Right ventricle myocardium inferior (tissue), 1 donor: ENCODE measurements at regions of chr7 and their contacts with region 1.

Region 1: DNA sequence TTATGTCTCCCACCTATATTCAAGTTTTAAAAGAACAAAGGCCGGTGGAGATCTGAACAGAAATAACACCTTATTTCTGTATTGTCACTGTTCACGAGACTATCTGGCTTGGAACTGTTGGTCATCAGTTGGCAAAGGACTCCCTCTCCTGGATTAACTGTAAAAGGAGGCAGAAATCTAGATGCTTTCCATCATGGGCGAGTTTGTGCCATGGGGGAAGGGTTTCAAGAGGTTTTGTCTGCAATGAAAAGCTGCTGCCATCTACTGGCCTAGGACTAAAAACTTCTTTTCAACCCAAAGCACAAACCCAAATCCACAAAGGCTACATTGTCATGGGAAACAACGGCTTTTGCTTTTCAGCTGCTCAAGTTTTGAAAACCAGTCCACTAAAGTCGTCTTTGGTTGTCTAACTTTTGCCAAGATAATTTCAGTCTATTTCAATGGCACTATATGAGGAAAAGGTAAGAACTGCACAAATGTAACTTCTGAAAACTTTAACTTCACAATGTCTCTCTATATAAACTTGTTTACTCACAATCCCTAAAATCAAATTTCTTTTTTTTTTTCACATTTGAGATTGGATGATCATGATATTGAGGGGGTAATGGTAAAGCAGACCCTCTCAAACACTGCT is 196.8 kb downstream of the SKAP2 start:
- DNase-seq: no peak
- ATAC-seq: peak; percentile 28

Region 2: GRCh38 chr7:25894902-25895791 is 772.5 kb before region 1 on chr7:
- intact Hi-C with region 1: loop called (anchors 5 kb)
- DNase-seq: peak; percentile 76
- ATAC-seq: peak; percentile 59

Region 3: GRCh38 chr7:26083113-26083512 is 584.5 kb before region 1 on chr7:
- intact Hi-C with region 1: loop called (anchors 10 kb)
- DNase-seq: no peak
- ATAC-seq: no peak

Region 4: GRCh38 chr7:26627891-26628341 is 39.7 kb before region 1 on chr7:
- intact Hi-C with region 1: no loop called
- DNase-seq: no peak
- ATAC-seq: peak; percentile 65

Region 5: GRCh38 chr7:26805045-26805444 is 137.4 kb after region 1 on chr7:
- intact Hi-C with region 1: loop called (anchors 5 kb)
- DNase-seq: no peak
- ATAC-seq: no peak

Region 6: DNA sequence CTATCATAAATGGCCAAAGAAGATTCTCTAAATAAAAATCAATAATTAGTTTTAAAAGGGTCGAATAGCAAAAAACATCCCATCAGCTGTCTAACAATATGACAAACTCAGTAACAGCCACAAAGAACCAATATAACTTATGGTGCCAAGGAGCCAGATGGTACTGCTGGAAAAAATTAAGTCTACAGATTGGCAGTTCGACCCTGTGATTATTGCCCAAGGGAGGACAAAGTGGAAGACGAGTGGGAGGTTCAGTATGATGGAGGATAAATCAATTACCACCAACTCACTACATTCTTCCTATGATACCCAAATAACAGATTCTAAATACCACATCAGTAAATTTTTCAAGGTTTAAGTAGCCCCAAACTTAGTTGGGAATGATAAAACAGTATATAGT is 147.8 kb after region 1 on chr7:
- intact Hi-C with region 1: no loop called
- DNase-seq: no peak
- ATAC-seq: no peak

Region 7: DNA sequence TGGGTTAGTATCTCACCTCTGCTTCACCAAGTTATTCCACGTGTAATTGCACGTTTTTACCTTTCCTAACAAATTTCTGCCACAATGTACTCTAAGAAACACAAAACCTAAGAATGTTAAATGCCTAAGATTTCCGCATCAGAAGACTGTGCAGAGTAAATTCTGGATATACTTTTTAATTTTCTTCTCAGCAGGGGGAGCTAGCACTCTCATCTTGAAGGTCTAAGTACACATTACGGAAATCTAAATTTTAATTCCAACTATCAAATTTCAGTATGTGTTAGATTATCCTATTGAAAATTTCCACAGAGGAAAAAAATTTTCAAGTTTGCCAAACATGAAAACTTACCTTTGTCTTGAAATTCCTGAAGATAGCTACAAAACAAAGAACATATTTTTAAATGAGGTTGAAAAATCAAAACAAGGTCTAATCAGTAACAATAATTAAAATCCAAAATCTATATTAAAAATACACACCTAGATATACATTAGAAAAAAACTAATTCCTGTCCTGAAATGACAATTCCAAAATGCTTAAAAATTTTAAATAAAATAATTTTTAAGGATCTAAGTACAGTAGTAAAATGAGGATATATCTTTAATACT is 186.3 kb after region 1 on chr7:
- intact Hi-C with region 1: no loop called
- DNase-seq: no peak
- ATAC-seq: no peak